B cell (primary cell): ENCODE measurements at regions of chr13 and their contacts with region 1.

Region 1: GRCh38 chr13:46369506-46370277 is 17.4 kb downstream of the RUBCNL start:
- DNase-seq: peak; percentile 65
- ATAC-seq: peak; percentile 48
- H3K4me3 ChIP-seq: peak overlapping the region; percentile 13 to 56 (median 42)
- H3K4me3 Mint-ChIP-seq: peak overlapping the region; percentile 78
- H3K27ac ChIP-seq: peak overlapping the region; percentile 59 to 84
- H3K27ac Mint-ChIP-seq: peak overlapping the region; percentile 82
- H3K4me1 ChIP-seq: peaks cover 68 to 73% of the 10 kb centered on the region in 2 donors
- H3K4me1 Mint-ChIP-seq: peaks cover 81% of the 10 kb centered on the region
- H3K27me3 ChIP-seq: no peaks in the 10 kb centered on the region
- H3K27me3 Mint-ChIP-seq: no peaks in the 10 kb centered on the region
- CTCF ChIP-seq: no peak

Region 2: GRCh38 chr13:45242070-45242469 is 1127.6 kb before region 1 on chr13:
- CTCF ChIA-PET with region 1: no interaction called
- POLR2A ChIA-PET with region 1: no interaction called
- intact Hi-C with region 1: no loop called
- DNase-seq: no peak
- ATAC-seq: no peak
- H3K4me3 ChIP-seq: no peak overlapping the region
- H3K4me3 Mint-ChIP-seq: no peak overlapping the region
- H3K27ac ChIP-seq: no peak overlapping the region
- H3K27ac Mint-ChIP-seq: no peak overlapping the region
- H3K4me1 ChIP-seq: no peaks in the 10 kb centered on the region
- H3K4me1 Mint-ChIP-seq: no peaks in the 10 kb centered on the region
- H3K27me3 ChIP-seq: no peaks in the 10 kb centered on the region
- H3K27me3 Mint-ChIP-seq: no peaks in the 10 kb centered on the region
- CTCF ChIP-seq: no peak

Region 3: DNA sequence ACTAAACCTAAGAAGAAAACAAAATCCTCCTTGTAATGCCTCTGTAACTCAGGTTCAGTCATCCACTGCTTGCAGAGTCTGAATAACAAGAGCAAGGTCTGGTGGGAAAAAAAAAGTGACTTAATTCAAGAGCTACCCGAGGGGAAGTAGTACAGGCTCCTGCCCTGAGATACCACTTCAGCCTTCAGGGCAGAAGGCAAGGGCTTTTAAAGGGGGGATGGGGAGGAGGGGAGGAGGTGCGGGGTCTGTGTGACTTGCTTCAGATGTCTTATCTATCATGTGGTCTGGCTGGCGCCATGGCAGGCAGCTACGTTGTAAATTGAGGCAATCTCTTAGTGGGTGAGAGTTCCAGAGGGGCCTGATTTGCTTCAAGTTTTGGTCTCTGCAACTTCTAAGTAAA is 91.2 kb before region 1 on chr13:
- CTCF ChIA-PET with region 1: no interaction called
- POLR2A ChIA-PET with region 1: no interaction called
- intact Hi-C with region 1: no loop called
- DNase-seq: no peak
- ATAC-seq: no peak
- H3K4me3 ChIP-seq: no peak overlapping the region
- H3K4me3 Mint-ChIP-seq: no peak overlapping the region
- H3K27ac ChIP-seq: no peak overlapping the region
- H3K27ac Mint-ChIP-seq: no peak overlapping the region
- H3K4me1 ChIP-seq: no peaks in the 10 kb centered on the region
- H3K4me1 Mint-ChIP-seq: no peaks in the 10 kb centered on the region
- H3K27me3 ChIP-seq: no peaks in the 10 kb centered on the region
- H3K27me3 Mint-ChIP-seq: peaks cover 3% of the 10 kb centered on the region
- CTCF ChIP-seq: no peak

Region 4: DNA sequence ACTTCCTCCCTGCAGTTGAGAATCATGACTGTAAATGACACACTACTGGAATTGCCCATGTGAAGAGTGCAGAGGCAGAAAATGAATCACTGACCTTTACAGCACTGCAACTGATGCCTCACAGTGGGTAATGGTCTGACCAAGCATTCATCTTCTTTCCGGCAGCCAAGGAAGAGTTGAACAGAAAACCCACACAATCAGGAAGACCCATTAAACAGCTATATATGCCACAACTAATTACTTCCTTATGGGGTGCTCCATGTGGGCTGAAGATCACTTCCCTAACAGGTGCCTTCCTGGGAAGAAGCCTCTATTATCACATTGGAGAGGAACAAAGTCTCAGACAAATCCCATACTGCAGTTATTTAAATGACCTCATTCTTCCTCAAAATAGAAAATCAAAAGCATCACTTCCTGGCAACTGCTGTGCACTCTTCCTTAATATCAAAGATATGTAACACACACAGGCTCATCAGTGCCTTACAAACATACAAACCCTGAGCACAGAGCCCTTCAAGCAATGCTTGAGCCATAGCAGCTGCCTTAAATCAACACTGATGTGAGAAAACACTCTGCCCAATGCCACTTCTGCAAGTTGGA is 28.5 kb before region 1 on chr13:
- CTCF ChIA-PET with region 1: no interaction called
- POLR2A ChIA-PET with region 1: interaction called, 5 read pairs
- intact Hi-C with region 1: loop called (anchors 5 kb)
- DNase-seq: peak; percentile 35
- ATAC-seq: peak; percentile 54
- H3K4me3 ChIP-seq: no peak overlapping the region
- H3K4me3 Mint-ChIP-seq: peak overlapping the region; percentile 60
- H3K27ac ChIP-seq: peak overlapping the region; percentile 72 to 80
- H3K27ac Mint-ChIP-seq: peak overlapping the region; percentile 75
- H3K4me1 ChIP-seq: peaks cover 35 to 44% of the 10 kb centered on the region in 2 donors
- H3K4me1 Mint-ChIP-seq: peaks cover 68% of the 10 kb centered on the region
- H3K27me3 ChIP-seq: no peaks in the 10 kb centered on the region
- H3K27me3 Mint-ChIP-seq: no peaks in the 10 kb centered on the region
- CTCF ChIP-seq: no peak

Region 5: GRCh38 chr13:46354156-46355091 is 15.3 kb before region 1 on chr13:
- CTCF ChIA-PET with region 1: interaction called, 5 read pairs
- POLR2A ChIA-PET with region 1: interaction called, 11 read pairs
- intact Hi-C with region 1: loop called (anchors 2 kb)
- DNase-seq: no peak
- ATAC-seq: peak; percentile 24
- H3K4me3 ChIP-seq: no peak overlapping the region
- H3K4me3 Mint-ChIP-seq: no peak overlapping the region
- H3K27ac ChIP-seq: peak overlapping the region in 1 of 2 donors; percentile 53
- H3K27ac Mint-ChIP-seq: peak overlapping the region; percentile 43
- H3K4me1 ChIP-seq: no peaks in the 10 kb centered on the region
- H3K4me1 Mint-ChIP-seq: peaks cover 2% of the 10 kb centered on the region
- H3K27me3 ChIP-seq: no peaks in the 10 kb centered on the region
- H3K27me3 Mint-ChIP-seq: no peaks in the 10 kb centered on the region
- CTCF ChIP-seq: no peak

Region 6: GRCh38 chr13:46403851-46404732 is 34.4 kb after region 1 on chr13:
- CTCF ChIA-PET with region 1: interaction called, 4 read pairs
- POLR2A ChIA-PET with region 1: no interaction called
- intact Hi-C with region 1: loop called (anchors 5 kb)
- DNase-seq: no peak
- ATAC-seq: no peak
- H3K4me3 ChIP-seq: no peak overlapping the region
- H3K4me3 Mint-ChIP-seq: peak overlapping the region; percentile 5
- H3K27ac ChIP-seq: peak overlapping the region in 1 of 2 donors; percentile 8
- H3K27ac Mint-ChIP-seq: peak overlapping the region; percentile 37
- H3K4me1 ChIP-seq: peaks cover 45 to 54% of the 10 kb centered on the region in 2 donors
- H3K4me1 Mint-ChIP-seq: peaks cover 55% of the 10 kb centered on the region
- H3K27me3 ChIP-seq: no peaks in the 10 kb centered on the region
- H3K27me3 Mint-ChIP-seq: no peaks in the 10 kb centered on the region
- CTCF ChIP-seq: no peak

Region 7: GRCh38 chr13:46475541-46475991 is 105.9 kb after region 1 on chr13:
- CTCF ChIA-PET with region 1: no interaction called
- POLR2A ChIA-PET with region 1: no interaction called
- intact Hi-C with region 1: no loop called
- DNase-seq: no peak
- ATAC-seq: no peak
- H3K4me3 ChIP-seq: no peak overlapping the region
- H3K4me3 Mint-ChIP-seq: no peak overlapping the region
- H3K27ac ChIP-seq: no peak overlapping the region
- H3K27ac Mint-ChIP-seq: no peak overlapping the region
- H3K4me1 ChIP-seq: no peaks in the 10 kb centered on the region
- H3K4me1 Mint-ChIP-seq: no peaks in the 10 kb centered on the region
- H3K27me3 ChIP-seq: no peaks in the 10 kb centered on the region
- H3K27me3 Mint-ChIP-seq: peaks cover 10% of the 10 kb centered on the region
- CTCF ChIP-seq: no peak

Region 8: DNA sequence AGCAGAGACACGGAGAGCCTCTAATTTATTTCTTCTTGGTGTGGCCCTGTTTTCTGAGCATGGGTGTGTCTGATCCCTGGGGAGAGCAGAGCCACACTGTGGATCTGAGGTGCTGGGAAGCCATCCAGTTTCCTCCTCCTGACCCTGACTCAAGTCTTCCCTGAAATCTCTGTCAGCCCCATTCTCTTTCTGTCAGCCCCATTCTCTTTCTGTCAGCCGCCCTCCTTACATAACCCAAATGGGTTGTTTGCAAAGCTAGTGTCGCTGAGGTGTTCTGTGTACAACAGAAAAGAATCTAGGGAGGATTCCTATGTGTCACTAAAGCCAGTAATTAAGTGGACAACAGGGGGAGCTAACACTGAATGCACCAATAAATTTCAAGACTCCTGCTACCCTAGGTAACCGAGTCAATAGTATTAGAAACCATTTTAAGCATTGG is 233.5 kb after region 1 on chr13:
- CTCF ChIA-PET with region 1: no interaction called
- POLR2A ChIA-PET with region 1: no interaction called
- intact Hi-C with region 1: no loop called
- DNase-seq: no peak
- ATAC-seq: no peak
- H3K4me3 ChIP-seq: no peak overlapping the region
- H3K4me3 Mint-ChIP-seq: no peak overlapping the region
- H3K27ac ChIP-seq: no peak overlapping the region
- H3K27ac Mint-ChIP-seq: no peak overlapping the region
- H3K4me1 ChIP-seq: peaks cover 84 to 89% of the 10 kb centered on the region in 2 donors
- H3K4me1 Mint-ChIP-seq: peaks cover 91% of the 10 kb centered on the region
- H3K27me3 ChIP-seq: no peaks in the 10 kb centered on the region
- H3K27me3 Mint-ChIP-seq: no peaks in the 10 kb centered on the region
- CTCF ChIP-seq: no peak

Region 9: GRCh38 chr13:46796515-46797474 is 427.1 kb after region 1 on chr13 and contains the start of gene ESD:
- CTCF ChIA-PET with region 1: no interaction called
- POLR2A ChIA-PET with region 1: no interaction called
- intact Hi-C with region 1: loop called (anchors 10 kb)
- DNase-seq: peak; percentile 89
- ATAC-seq: peak; percentile 93
- H3K4me3 ChIP-seq: peak within 1 kb of the TSS; percentile 56 to 99 (median 77)
- H3K4me3 Mint-ChIP-seq: peak within 1 kb of the TSS; percentile 90
- H3K27ac ChIP-seq: peak within 1 kb of the TSS; percentile 78 to 89
- H3K27ac Mint-ChIP-seq: peak within 1 kb of the TSS; percentile 93
- H3K4me1 ChIP-seq: peaks cover 16 to 18% of the 10 kb centered on the region in 2 donors
- H3K4me1 Mint-ChIP-seq: peaks cover 30% of the 10 kb centered on the region
- H3K27me3 ChIP-seq: no peaks in the 10 kb centered on the region
- H3K27me3 Mint-ChIP-seq: no peaks in the 10 kb centered on the region
- CTCF ChIP-seq: no peak
- total RNA-seq, gene ESD: 52.9 and 53.4 TPM in 2 replicates